ENCODE measurements at regions of chr16 and their contacts with region 1.

Region 1: DNA sequence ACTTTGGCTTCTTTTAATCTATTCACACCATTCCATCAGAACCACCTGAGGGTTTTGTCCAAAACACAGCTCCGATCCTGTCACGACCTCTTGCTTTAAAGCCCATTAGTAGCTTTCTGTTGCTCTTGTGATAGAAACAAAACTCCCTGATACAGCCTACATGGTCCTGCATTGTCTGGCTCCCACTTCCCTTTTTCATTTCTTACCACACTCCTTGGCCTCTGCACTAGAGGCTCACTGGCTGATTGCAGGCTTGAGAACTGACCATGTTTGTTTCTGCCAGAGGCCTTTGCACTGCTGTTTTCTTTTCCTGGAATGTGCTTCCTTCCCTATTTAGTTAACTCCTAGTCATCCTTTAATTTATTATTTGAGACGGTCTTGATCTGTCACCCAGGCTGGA is 23.7 kb downstream of the IST1 start:
- DNase-seq: no peak
- H3K4me3 Mint-ChIP-seq: no peak overlapping the region
- H3K27ac Mint-ChIP-seq: no peak overlapping the region
- H3K4me1 Mint-ChIP-seq: peaks cover 28% of the 10 kb centered on the region
- H3K27me3 Mint-ChIP-seq: no peaks in the 10 kb centered on the region

Region 2: DNA sequence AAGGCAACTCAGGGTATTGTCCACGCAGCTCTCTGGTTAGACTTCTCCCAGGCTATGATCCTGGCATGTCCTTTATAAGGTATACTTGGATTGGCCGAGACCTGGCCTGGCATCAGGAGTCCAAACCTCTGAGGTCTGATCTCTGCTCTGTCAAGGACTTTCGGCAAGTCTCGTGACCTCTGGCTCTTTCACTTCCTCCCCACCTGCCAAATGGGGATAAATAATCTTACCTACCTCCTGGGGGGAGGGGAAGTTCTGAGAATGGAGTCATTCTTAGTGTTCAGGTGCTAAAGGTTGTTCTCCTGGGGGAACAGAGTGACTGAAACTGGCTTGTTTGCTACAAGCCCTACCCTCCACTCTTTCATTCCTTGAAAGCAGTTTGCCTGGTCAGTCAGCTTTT is 65.6 kb before region 1 on chr16:
- CTCF ChIA-PET with region 1: no interaction called
- intact Hi-C with region 1: no loop called
- DNase-seq: no peak
- H3K4me3 Mint-ChIP-seq: no peak overlapping the region
- H3K27ac Mint-ChIP-seq: peak overlapping the region; percentile 20
- H3K4me1 Mint-ChIP-seq: peaks cover 52% of the 10 kb centered on the region
- H3K27me3 Mint-ChIP-seq: no peaks in the 10 kb centered on the region

Region 3: GRCh38 chr16:71929048-71929447 is 10.0 kb after region 1 on chr16:
- CTCF ChIA-PET with region 1: no interaction called
- intact Hi-C with region 1: loop called (anchors 2 kb)
- DNase-seq: no peak
- H3K4me3 Mint-ChIP-seq: no peak overlapping the region
- H3K27ac Mint-ChIP-seq: peak overlapping the region; percentile 65
- H3K4me1 Mint-ChIP-seq: peaks cover 9% of the 10 kb centered on the region
- H3K27me3 Mint-ChIP-seq: no peaks in the 10 kb centered on the region

Region 4: GRCh38 chr16:72474501-72475123 is 555.6 kb after region 1 on chr16:
- CTCF ChIA-PET with region 1: no interaction called
- intact Hi-C with region 1: no loop called
- DNase-seq: peak; percentile 10
- H3K4me3 Mint-ChIP-seq: no peak overlapping the region
- H3K27ac Mint-ChIP-seq: no peak overlapping the region
- H3K4me1 Mint-ChIP-seq: peaks cover 14% of the 10 kb centered on the region
- H3K27me3 Mint-ChIP-seq: no peaks in the 10 kb centered on the region